ENCODE measurements at regions of chr4 and their contacts with region 1.

Region 1: DNA sequence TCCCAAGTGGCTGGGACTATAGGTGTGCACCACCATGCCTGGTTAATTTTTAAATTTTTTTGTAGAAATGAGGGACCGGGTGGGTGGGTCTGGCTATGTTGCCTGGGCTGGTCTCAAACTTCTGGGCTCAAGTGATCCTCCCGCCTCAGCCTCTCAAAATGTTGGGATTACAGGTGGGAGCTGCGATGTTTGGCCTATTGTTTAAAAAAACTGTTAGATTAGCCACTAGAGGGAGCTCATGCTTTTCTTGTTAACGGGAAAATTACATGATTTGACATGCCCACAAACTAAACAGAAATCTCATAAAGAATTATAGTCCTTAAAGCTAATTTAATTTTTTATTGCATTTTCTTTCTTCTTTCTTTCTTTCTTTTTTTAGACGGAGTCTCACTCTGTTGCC is 5.0 kb upstream of the SDAD1 start:
- DNase-seq: no peak
- ATAC-seq: peak; percentile 42
- H3K4me3 ChIP-seq: no peak overlapping the region
- H3K27ac ChIP-seq: no peak overlapping the region
- H3K4me1 ChIP-seq: peaks cover 3% of the 10 kb centered on the region
- H3K27me3 ChIP-seq: no peaks in the 10 kb centered on the region
- CTCF ChIP-seq: peak; percentile 73

Region 2: GRCh38 chr4:75211408-75211807 is 784.3 kb before region 1 on chr4:
- intact Hi-C with region 1: no loop called
- DNase-seq: no peak
- ATAC-seq: no peak
- H3K4me3 ChIP-seq: no peak overlapping the region
- H3K27ac ChIP-seq: no peak overlapping the region
- H3K4me1 ChIP-seq: no peaks in the 10 kb centered on the region
- H3K27me3 ChIP-seq: no peaks in the 10 kb centered on the region
- CTCF ChIP-seq: no peak

Region 3: GRCh38 chr4:75484190-75484589 is 511.5 kb before region 1 on chr4:
- intact Hi-C with region 1: no loop called
- DNase-seq: no peak
- ATAC-seq: no peak
- H3K4me3 ChIP-seq: no peak overlapping the region
- H3K27ac ChIP-seq: no peak overlapping the region
- H3K4me1 ChIP-seq: no peaks in the 10 kb centered on the region
- H3K27me3 ChIP-seq: no peaks in the 10 kb centered on the region
- CTCF ChIP-seq: no peak

Region 4: DNA sequence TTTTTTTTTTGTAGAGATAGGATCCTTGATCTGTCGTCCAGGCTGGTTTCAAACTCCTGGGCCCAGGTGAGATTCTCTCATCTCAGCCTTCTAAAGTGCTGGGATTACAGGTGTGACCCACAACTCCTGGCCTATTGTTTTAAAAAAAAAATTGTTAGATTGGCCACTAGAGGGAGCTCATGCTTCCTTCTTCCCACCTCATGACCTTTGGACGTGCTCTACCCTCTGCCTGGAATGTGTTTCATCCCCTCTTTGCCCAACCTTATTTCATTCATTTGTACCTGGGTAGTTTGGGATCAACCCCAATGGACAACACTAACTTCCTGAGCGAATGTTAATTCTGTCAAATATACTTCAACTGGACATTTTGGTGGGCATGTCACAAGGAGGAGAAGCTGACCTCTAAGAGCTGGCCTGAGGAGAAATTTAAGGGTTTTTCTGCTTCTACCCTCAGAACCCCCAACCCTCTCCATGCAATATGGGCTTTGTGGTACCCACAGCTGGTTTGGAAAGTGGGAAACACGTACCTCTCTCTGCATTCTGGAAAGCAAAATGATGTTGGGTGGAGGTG is 99.9 kb before region 1 on chr4:
- intact Hi-C with region 1: no loop called
- DNase-seq: no peak
- ATAC-seq: peak; percentile 85
- H3K4me3 ChIP-seq: no peak overlapping the region
- H3K27ac ChIP-seq: no peak overlapping the region
- H3K4me1 ChIP-seq: no peaks in the 10 kb centered on the region
- H3K27me3 ChIP-seq: no peaks in the 10 kb centered on the region
- CTCF ChIP-seq: peak; percentile 65

Region 5: DNA sequence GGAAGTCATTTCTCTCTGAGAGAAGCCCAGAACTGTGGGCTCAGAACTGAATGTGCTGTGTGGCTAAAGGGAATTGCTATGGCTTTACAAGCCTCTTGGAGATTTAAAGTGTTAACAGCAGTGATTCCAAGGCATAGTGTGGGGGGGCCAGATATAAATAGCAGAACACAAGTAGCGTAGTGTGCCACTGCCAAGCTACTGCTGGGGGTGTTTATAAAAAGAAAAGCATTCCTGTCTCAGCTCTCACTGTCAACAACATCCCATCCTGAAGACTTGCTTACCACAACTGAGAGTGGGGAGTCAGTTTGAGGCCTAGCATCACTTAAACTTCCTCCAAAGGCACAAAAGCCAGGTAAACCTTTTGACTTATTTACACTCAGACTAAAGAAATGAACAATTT is 78.7 kb after region 1 on chr4 and contains the start of gene ART3:
- intact Hi-C with region 1: loop called (anchors 5 kb)
- DNase-seq: no peak
- ATAC-seq: no peak
- H3K4me3 ChIP-seq: no peak within 1 kb of the TSS
- H3K27ac ChIP-seq: no peak within 1 kb of the TSS
- H3K4me1 ChIP-seq: no peaks in the 10 kb centered on the region
- H3K27me3 ChIP-seq: no peaks in the 10 kb centered on the region
- CTCF ChIP-seq: no peak
- total RNA-seq, gene ART3: not detected

Measured in upper lobe of right lung (tissue), 1 donor.